ENCODE measurements at regions of chr9 and their contacts with region 1.

Region 1: GRCh38 chr9:6757456-6758247 is at the start of gene KDM4C:
- DNase-seq: peak; percentile 100
- H3K4me3 ChIP-seq: peak within 1 kb of the TSS; percentile 77 to 98
- H3K27ac ChIP-seq: peak within 1 kb of the TSS; percentile 91 to 96
- H3K4me1 ChIP-seq: peaks cover 0 to 4% of the 10 kb centered on the region in 2 experiments; a peak in 2 of 4 replicates
- H3K27me3 ChIP-seq: no peaks in the 10 kb centered on the region
- CTCF ChIP-seq: no peak
- EP300 ChIP-seq: no peak; a peak in 1 of 4 replicates
- RAD21 ChIP-seq: no peak
- polyA plus RNA-seq, gene KDM4C: 9.4 and 11.4 TPM in 2 replicates

Region 2: GRCh38 chr9:6739218-6739617 is 18.4 kb before region 1 on chr9:
- CTCF ChIA-PET with region 1: interaction called, 3 read pairs
- POLR2A ChIA-PET with region 1: interaction called, 13 read pairs
- DNase-seq: peak; percentile 33
- H3K4me3 ChIP-seq: no peak overlapping the region
- H3K27ac ChIP-seq: no peak overlapping the region
- H3K4me1 ChIP-seq: no peaks in the 10 kb centered on the region
- H3K27me3 ChIP-seq: no peaks in the 10 kb centered on the region
- CTCF ChIP-seq: peak; percentile 52
- EP300 ChIP-seq: no peak
- RAD21 ChIP-seq: peak; percentile 65

Measured in SK-N-SH (cell line).